ENCODE measurements at regions of chr9 and their contacts with region 1.

Region 1: DNA sequence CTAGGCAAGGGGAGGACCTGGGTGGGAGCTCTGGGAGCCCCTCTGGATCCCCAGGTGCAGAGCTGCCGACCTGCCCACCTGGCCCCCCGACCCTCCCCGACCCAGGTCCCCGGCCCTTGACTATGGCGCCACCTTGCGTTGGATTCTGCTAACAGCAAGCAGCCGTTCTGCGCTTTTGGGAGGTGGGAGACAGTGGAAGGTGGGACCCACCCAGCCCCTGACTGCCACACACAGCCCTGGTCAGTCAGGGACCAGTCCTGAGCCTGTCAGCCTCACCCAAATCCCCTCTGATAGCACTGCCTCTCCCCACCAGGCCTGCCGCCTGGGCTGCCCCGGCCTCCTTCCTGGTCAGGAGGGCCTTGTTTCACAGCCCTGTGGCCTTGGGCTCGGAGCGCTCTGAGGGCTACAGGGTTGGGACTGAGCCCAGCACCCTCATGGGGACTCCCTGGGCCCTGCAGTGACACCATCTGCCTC is 77.9 kb downstream of the HMCN2 start:
- DNase-seq: peak in 1 of 5 donors; percentile 37
- ATAC-seq: peak in 1 of 4 donors; percentile 19
- H3K4me3 ChIP-seq: no peak overlapping the region
- H3K27ac ChIP-seq: no peak overlapping the region
- H3K4me1 ChIP-seq: peaks cover 0 to 2% (median 0%) of the 10 kb centered on the region in 12 donors
- H3K27me3 ChIP-seq: no peaks in the 10 kb centered on the region
- CTCF ChIP-seq: peak; percentile 56 to 81 (median 70)
- POLR2A ChIP-seq: no peak

Region 2: DNA sequence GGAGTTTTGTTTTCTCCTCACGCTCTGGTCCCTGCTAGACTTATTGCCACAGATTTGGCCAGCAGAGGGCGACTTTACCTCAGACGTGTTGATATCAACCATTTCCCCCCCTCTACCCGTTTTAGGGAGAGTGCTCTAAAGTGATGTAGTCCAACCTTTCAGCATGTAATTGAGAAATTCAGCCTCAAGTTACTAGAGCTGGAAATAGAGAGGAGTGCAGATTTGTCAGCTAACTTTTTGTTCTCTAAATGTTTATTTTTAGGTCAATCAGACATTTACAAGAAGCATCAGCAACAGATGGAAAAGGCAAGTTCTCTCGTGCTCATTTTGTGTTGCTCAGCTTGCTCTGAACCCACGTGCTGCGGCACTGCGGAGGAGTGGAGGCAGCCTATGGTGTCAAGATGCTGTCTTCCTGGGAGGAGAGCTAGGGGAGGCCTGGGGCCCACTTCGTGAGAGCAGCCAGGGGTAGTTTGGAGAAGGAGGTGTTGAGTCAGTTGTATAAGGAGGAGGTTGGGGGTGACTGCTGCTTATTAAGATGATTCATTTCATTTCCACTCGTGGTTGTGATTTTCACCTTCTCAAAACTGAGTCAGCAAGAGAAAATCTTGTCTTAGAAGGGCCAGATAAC is 236.1 kb before region 1 on chr9:
- intact Hi-C with region 1: loop called in 9 of 10 experiments (anchors 2 to 10 kb)
- DNase-seq: peak; percentile 69 to 91 (median 79)
- ATAC-seq: peak in 3 of 4 donors; percentile 80 to 87 (median 86)
- H3K4me3 ChIP-seq: no peak overlapping the region
- H3K27ac ChIP-seq: peak overlapping the region in 1 of 12 donors; percentile 73
- H3K4me1 ChIP-seq: peaks cover 0 to 9% (median 0%) of the 10 kb centered on the region in 12 donors
- H3K27me3 ChIP-seq: no peaks in the 10 kb centered on the region
- CTCF ChIP-seq: peak; percentile 69 to 86 (median 80)
- POLR2A ChIP-seq: no peak

Region 3: DNA sequence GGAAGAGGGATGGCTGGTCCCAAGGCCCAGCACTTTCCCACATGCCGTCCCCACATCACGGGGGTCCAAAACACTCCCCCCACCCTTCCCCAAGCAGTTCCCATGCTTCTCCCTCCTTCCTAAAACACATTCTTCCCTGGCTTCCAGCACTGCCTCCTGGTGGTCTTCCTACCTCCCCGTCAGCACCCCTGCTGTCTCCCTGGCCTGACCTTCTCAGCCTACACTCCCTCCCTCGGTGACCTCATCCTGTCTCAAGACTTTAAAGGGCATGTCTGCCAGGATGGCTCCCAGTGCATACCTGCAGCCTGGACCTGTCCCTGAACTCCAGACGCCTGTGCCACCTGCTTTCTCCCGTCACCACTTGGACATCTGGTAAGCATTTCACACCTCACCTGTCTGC is 175.6 kb before region 1 on chr9:
- intact Hi-C with region 1: no loop called
- DNase-seq: no peak
- ATAC-seq: no peak
- H3K4me3 ChIP-seq: no peak overlapping the region
- H3K27ac ChIP-seq: no peak overlapping the region
- H3K4me1 ChIP-seq: peaks cover 0 to 11% (median under 1%) of the 10 kb centered on the region in 12 donors
- H3K27me3 ChIP-seq: peaks cover 0 to 13% (median 0%) of the 10 kb centered on the region in 9 donors
- CTCF ChIP-seq: no peak
- POLR2A ChIP-seq: no peak

Region 4: DNA sequence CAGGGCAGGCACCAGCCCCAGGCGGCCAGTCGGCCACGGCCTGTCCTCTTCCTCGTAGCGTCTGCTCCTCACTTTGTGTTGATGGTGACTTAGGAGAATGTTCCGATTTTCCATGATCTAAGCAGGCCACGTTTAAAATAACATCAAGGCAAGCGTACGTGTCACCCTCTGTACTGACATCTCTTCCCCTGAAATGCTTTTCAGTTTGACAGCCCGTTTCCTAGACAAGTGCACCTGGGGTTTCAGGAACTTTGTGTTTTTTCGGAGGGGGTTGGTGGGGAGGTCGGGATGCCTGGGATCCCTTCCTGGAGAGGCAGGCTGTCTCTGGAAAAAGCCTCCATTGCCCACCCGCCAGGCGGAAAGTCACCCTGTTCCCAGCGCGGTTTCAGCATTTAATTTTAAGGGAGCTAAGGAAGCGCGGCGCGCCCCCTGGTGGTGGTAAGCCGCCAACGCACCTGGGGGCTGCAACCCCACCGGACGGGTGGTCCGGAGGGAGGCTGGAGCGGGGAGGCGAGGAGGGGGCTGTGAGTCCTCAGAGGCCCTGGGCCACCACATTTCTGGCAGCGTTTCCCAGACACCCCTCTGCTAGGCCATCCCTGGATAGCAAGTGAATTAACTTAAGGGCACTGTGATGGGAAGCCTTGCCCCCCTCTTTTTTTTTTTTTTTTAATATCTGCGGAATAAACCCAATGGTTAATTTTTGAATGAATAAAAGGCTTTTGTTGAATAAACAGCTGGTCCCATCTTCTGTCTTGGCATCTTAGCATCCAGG is 107.4 kb before region 1 on chr9:
- intact Hi-C with region 1: loop called in 2 of 10 experiments (anchors 5 kb)
- DNase-seq: peak; percentile 55 to 80 (median 65)
- ATAC-seq: peak; percentile 15 to 59 (median 48)
- H3K4me3 ChIP-seq: peak overlapping the region in 1 of 12 donors; percentile 19
- H3K27ac ChIP-seq: peak overlapping the region in 1 of 12 donors; percentile 80
- H3K4me1 ChIP-seq: peaks cover 0 to 15% (median 1%) of the 10 kb centered on the region in 12 donors
- H3K27me3 ChIP-seq: no peaks in the 10 kb centered on the region
- CTCF ChIP-seq: peak; percentile 96 to 100 (median 99)
- POLR2A ChIP-seq: no peak

Region 5: DNA sequence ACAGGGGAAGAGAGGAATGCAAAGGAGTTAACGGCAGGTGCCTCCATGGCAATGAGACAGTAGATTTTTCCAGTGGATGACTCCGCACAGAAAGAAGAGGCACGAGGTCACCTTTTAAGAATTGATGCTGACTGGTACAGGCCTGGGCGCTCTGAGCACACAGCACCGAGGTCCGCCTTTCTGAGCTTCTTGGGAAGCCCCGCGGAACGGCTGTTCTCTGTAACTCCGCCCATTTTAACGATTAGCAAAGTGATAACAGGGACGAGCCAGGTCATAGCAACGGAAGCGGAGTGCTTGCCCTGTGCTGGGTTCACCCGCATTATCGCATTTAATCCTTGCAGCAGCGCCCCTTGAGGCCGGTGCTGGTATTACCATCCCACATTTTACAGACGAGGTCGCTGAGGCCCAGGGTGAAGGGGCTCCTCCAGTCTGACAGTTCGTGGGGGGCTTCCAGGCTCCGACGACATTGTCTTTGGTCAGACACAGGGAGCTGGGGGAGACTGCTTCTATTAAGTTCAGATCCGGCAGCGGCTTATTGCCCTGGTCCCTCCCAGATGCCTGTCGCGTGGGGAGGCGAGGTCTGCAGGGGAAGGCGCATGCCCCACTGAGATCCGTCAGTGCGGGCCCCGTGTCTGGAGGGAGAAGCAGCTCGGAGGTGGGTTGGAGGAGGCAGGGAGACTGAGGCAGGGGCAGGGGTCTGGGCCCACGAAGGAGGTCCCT is 100.3 kb before region 1 on chr9:
- intact Hi-C with region 1: loop called in 2 of 10 experiments (anchors 5 kb)
- DNase-seq: peak; percentile 50 to 81 (median 60)
- ATAC-seq: peak; percentile 63 to 72 (median 70)
- H3K4me3 ChIP-seq: peak overlapping the region in 2 of 12 donors; percentile 18 to 35
- H3K27ac ChIP-seq: no peak overlapping the region
- H3K4me1 ChIP-seq: peaks cover 0 to 9% (median 3%) of the 10 kb centered on the region in 12 donors
- H3K27me3 ChIP-seq: no peaks in the 10 kb centered on the region
- CTCF ChIP-seq: peak; percentile 83 to 97 (median 92)
- POLR2A ChIP-seq: no peak

Region 6: DNA sequence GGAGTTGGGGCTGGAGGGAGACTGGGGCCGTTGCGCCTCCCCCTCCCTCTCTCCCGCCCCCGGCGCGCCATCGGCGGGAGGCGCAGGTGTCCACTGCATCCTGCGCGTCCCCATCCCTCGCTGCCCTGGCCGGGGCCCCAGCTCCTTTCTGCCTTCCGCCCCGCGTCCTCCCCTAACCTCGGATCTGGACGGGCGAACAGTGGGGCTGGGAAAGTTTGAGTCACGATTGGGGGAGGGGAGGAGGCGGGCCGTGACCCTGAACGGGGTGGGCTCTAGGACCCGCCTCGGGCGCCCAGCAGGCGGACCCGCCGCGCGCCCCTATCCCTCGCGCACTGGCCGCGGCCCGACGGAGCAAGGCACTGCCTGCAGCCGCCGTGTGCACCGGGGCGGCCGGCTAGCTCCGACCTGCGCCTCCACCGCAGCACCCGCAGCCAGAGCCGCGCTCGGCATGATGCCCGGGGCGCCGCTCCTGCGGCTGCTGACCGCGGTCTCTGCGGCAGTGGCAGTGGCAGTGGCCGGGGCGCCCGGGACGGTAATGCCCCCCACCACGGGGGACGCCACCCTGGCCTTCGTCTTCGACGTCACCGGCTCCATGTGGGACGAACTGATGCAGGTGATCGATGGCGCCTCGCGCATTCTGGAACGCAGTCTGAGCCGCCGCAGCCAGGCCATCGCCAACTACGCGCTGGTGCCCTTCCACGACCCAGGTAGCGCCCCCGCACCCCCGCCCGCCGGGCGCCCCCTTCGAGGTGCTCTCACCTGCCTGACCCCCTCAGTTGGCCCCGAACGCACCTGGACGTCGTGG is 77.8 kb before region 1 on chr9 and contains the start of gene HMCN2:
- intact Hi-C with region 1: loop called in 4 of 10 experiments (anchors 5 to 10 kb)
- DNase-seq: peak in 4 of 5 donors; percentile 48 to 70 (median 66)
- ATAC-seq: peak in 3 of 4 donors; percentile 58 to 69 (median 64)
- H3K4me3 ChIP-seq: peak within 1 kb of the TSS; percentile 13 to 63 (median 47)
- H3K27ac ChIP-seq: peak within 1 kb of the TSS in 8 of 12 donors; percentile 33 to 84 (median 58)
- H3K4me1 ChIP-seq: peaks cover 0 to 56% (median 15%) of the 10 kb centered on the region in 12 donors
- H3K27me3 ChIP-seq: peaks cover 7 to 53% (median 33%) of the 10 kb centered on the region in 9 donors
- CTCF ChIP-seq: no peak
- POLR2A ChIP-seq: no peak
- total RNA-seq, gene HMCN2: 2.3 to 10.4 (median 3.8) TPM

Region 7: GRCh38 chr9:130408669-130409068 is 65.2 kb after region 1 on chr9:
- intact Hi-C with region 1: no loop called
- DNase-seq: no peak
- ATAC-seq: no peak
- H3K4me3 ChIP-seq: no peak overlapping the region
- H3K27ac ChIP-seq: no peak overlapping the region
- H3K4me1 ChIP-seq: no peaks in the 10 kb centered on the region
- H3K27me3 ChIP-seq: no peaks in the 10 kb centered on the region
- CTCF ChIP-seq: no peak
- POLR2A ChIP-seq: no peak

Measured in heart left ventricle (tissue), 16 donors.